Endothelial cell of umbilical vein (primary cell): ENCODE measurements at regions of chr10 and their contacts with region 1.

Region 1: DNA sequence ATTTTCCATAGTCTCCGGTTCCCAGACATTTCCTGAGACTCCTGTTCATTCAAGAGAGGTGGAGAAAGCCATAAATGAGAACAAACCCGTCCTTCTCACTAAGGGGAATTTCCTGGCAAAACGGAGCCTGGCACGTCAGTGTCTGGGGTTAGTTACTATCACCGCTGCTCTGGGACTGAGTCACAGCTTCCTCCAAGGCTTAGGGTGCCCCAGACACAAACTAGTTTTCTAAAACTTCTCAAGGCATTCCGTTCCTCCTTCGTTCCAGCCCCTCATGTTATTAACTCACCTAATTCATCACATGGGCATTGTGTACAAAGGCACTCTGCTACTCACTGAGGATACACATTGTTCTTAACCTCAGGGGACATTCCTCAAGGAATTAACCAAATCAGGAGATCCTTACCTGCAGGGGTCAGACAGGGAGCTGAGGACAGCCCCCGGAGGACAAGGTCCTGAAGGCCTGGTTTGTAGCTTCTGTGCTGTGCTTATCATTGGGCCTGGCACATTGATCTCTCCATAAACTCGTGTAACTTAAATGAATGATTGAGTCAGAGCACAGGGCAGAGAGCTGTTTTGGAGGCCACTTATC is 103.0 kb upstream of the KLF6 start:
- DNase-seq: peak; percentile 97
- H3K4me3 ChIP-seq: peak overlapping the region in 1 of 3 experiments; percentile 22
- H3K27ac ChIP-seq: peak overlapping the region; percentile 100
- H3K4me1 ChIP-seq: peaks cover 56% of the 10 kb centered on the region
- H3K27me3 ChIP-seq: no peaks in the 10 kb centered on the region
- CTCF ChIP-seq: no peak
- POLR2A ChIP-seq: peak; percentile 65

Region 2: DNA sequence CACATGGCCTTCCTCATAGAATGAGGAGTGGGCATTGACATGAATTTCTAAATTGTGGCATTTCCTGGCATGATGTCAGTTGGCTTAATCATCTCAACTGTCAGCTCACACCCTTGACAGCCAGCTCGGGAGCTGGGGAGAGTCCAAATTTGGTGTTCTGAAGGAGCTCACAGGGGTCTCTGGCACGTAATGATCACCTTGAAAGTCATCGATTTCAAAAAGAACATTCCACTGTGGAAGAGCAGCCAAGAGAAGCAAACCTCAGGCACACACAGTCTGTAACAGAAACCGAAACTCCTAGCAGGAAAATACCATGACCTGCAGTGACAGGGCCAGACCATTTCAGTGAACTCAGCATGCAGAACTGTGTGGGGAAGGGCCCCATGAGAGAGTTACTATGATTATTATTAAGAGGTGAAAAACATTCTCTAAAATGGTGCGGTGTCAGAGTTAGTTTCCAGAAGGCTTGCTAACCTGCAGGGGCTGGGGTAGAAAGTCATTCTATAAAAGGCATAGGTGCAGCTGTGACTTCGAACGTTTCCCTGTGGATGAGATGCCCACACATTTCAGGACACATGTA is 76.6 kb before region 1 on chr10:
- CTCF ChIA-PET with region 1: interaction called, 4 read pairs
- POLR2A ChIA-PET with region 1: interaction called, 4 read pairs
- dilution Hi-C with region 1: no loop called
- intact Hi-C with region 1: loop called (anchors 1 kb)
- DNase-seq: peak; percentile 70
- H3K4me3 ChIP-seq: no peak overlapping the region
- H3K27ac ChIP-seq: peak overlapping the region; percentile 100
- H3K4me1 ChIP-seq: peaks cover 55% of the 10 kb centered on the region
- H3K27me3 ChIP-seq: no peaks in the 10 kb centered on the region
- CTCF ChIP-seq: no peak
- POLR2A ChIP-seq: peak; percentile 28

Region 3: DNA sequence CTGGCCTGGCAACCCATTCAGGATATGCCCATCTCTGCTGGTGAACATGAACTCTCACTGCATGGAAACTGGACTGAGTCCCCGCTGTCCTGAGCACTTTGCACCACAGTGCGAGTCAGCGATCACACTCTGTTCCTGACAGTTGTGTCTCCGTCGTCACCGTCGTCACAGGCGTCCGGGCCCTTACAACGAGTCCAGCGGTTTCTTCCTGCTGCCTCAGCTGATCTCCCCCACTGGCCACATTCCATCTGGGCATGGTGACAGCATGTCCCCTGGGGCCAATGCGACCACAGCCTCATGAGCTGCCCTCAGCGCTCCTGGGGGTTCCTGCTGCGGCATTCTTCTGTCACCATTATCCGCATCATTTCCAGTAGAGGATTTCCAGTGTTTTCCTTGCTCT is 26.2 kb before region 1 on chr10:
- CTCF ChIA-PET with region 1: no interaction called
- POLR2A ChIA-PET with region 1: no interaction called
- dilution Hi-C with region 1: no loop called
- intact Hi-C with region 1: loop called (anchors 2 kb)
- DNase-seq: no peak
- H3K4me3 ChIP-seq: no peak overlapping the region
- H3K27ac ChIP-seq: peak overlapping the region; percentile 97
- H3K4me1 ChIP-seq: peaks cover 10% of the 10 kb centered on the region
- H3K27me3 ChIP-seq: no peaks in the 10 kb centered on the region
- CTCF ChIP-seq: no peak
- POLR2A ChIP-seq: no peak

Region 4: DNA sequence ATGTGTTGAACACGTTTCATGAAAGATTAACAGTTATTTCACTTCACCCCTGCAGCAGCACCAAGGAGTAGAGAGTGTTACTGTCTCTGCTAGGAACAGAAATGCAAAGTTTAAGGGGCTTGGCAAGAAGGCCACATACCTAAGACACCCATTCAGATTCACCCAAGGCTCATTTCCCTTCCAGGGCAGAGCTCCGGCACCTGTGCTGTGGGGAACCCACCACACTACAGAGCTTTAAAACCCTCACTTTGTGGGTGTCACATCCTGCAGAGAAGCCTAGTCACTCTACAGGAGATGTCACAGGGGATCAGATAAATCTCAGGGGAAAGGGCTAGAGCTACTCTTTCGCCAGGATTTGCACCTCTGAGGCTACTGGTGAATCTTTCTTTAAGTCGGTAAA is 73.1 kb after region 1 on chr10:
- CTCF ChIA-PET with region 1: no interaction called
- POLR2A ChIA-PET with region 1: no interaction called
- dilution Hi-C with region 1: no loop called
- intact Hi-C with region 1: no loop called
- DNase-seq: no peak
- H3K4me3 ChIP-seq: no peak overlapping the region
- H3K27ac ChIP-seq: no peak overlapping the region
- H3K4me1 ChIP-seq: no peaks in the 10 kb centered on the region
- H3K27me3 ChIP-seq: no peaks in the 10 kb centered on the region
- CTCF ChIP-seq: no peak
- POLR2A ChIP-seq: no peak

Region 5: DNA sequence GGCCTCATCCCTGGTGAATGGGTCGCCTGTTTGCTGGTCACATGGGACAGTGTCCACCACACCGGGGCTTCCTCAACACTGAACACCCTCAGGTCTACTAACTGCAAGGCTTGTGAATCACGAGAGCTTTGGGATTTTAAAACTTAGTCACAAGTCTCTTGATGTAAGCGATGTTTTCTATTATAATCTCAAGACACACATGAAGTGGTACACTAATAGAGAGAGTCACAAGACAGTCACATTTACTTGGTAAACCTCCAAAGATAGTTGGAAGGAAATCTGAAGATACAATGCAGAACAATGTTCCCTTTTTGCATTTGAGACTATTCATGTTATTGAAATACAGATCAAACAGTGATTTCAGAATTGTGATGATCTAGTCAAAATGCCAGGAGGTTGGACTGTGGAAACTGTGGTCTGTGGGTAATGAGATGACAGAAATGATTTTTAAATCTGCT is 130.1 kb after region 1 on chr10:
- CTCF ChIA-PET with region 1: no interaction called
- POLR2A ChIA-PET with region 1: no interaction called
- dilution Hi-C with region 1: no loop called
- intact Hi-C with region 1: no loop called
- DNase-seq: no peak
- H3K4me3 ChIP-seq: no peak overlapping the region
- H3K27ac ChIP-seq: no peak overlapping the region
- H3K4me1 ChIP-seq: no peaks in the 10 kb centered on the region
- H3K27me3 ChIP-seq: no peaks in the 10 kb centered on the region
- CTCF ChIP-seq: no peak
- POLR2A ChIP-seq: no peak

Region 6: DNA sequence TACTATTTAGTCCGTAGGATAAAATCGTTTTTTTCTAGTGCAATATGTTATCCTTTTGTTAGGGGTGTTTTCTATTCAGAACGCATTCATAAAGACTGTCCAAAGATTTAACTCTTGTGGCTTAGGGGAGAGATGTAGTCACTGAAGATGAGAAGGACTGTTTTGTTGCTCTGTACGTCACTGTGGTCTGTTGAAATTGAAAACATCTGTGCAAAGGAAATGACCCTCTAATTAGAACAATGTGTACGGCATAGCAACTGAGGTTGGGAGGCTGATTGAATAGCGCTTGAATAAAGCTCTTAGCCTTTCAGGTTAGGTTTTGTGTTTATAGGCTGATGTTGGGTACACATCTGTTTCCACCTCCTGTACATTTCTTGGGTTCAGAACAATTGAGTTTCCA is 484.6 kb after region 1 on chr10:
- CTCF ChIA-PET with region 1: no interaction called
- POLR2A ChIA-PET with region 1: no interaction called
- dilution Hi-C with region 1: no loop called
- intact Hi-C with region 1: loop called (anchors 2 kb)
- DNase-seq: peak; percentile 93
- H3K4me3 ChIP-seq: no peak overlapping the region
- H3K27ac ChIP-seq: peak overlapping the region; percentile 91
- H3K4me1 ChIP-seq: peaks cover 14% of the 10 kb centered on the region
- H3K27me3 ChIP-seq: no peaks in the 10 kb centered on the region
- CTCF ChIP-seq: no peak
- POLR2A ChIP-seq: no peak

Region 7: DNA sequence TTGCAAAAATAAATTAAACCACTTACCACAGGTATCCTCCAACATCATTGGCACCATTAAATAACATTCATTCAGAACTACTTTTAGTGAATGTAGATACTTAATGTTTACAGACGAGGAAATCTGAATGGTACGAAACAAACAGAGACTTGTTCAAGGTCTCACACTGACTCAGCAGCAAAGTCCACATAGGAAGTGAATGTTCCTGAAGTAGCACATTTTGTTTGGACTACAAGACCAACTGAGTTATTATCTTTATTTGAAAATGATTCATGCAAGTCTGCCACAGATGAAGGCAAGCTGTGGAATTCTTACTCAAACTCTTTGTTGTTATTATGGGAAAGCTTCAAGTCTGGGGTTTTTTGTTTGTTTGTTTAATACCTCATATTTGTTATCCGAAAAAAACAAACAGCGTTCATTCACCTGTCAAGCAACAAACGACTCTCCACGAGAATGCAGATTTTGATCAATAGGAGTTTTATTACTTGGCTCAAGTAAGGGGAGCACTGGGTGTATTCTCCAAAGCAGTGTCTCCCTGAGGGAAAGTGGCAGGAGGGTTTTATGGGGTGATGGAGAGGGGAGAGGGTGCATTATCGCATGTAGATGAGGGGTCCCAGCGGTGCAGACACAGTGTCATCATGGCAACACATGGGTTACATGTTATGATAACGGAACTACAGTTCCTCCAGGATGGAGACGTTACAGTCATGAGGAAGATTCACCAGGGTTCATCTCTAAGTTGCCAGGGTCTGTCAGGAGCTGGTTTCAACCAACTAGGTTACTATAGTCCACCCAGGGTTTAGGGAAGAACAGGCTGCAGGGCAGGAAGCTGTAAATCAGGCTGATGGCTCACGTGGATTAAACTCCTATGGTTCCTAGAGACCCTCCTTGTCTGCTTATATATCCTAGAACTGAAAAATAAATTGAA is 790.3 kb after region 1 on chr10:
- CTCF ChIA-PET with region 1: no interaction called
- POLR2A ChIA-PET with region 1: no interaction called
- dilution Hi-C with region 1: no loop called
- intact Hi-C with region 1: loop called (anchors 1 kb)
- DNase-seq: peak; percentile 94
- H3K4me3 ChIP-seq: peak overlapping the region; percentile 32 to 99 (median 71)
- H3K27ac ChIP-seq: peak overlapping the region; percentile 84
- H3K4me1 ChIP-seq: peaks cover 31% of the 10 kb centered on the region
- H3K27me3 ChIP-seq: no peaks in the 10 kb centered on the region
- CTCF ChIP-seq: no peak
- POLR2A ChIP-seq: no peak